ENCODE measurements at regions of chr16 and their contacts with region 1.

Region 1: GRCh38 chr16:17224879-17225281 is 245.9 kb downstream of the XYLT1 start:
- DNase-seq: peak; percentile 50 to 75
- ATAC-seq: peak; percentile 97 to 99
- H3K4me3 ChIP-seq: no peak overlapping the region
- H3K27ac ChIP-seq: peak overlapping the region; percentile 43 to 63 (median 56)
- H3K4me1 ChIP-seq: peaks cover 23 to 32% of the 10 kb centered on the region in 2 donors
- H3K27me3 ChIP-seq: no peaks in the 10 kb centered on the region
- CTCF ChIP-seq: no peak
- POLR2A ChIP-seq: no peak

Region 2: DNA sequence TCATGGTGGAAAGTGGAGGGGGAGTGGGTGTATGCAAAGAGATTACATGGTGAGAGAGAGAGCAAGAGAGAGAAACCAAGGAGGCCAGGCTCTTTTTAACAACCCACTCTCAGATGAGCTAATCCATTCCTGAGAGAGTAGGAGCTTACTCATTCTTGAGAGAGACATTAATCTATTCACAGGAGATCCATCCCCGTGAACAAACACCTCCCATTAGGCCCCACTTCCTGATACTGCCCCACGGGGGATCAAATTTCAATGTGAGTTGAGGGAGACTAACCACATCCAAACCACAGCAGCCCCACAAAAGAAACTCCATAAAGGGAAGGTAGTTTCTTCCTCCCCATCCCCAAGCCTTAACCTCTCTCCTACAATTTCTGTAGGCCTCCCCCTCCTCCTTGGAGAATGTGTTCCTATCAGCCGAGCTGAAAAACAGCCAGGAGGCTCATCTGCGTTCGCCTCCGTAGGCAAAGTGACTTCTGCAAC is 395.9 kb before region 1 on chr16:
- in situ Hi-C with region 1: no loop called
- intact Hi-C with region 1: no loop called
- DNase-seq: no peak
- ATAC-seq: no peak
- H3K4me3 ChIP-seq: no peak overlapping the region
- H3K27ac ChIP-seq: no peak overlapping the region
- H3K4me1 ChIP-seq: no peaks in the 10 kb centered on the region
- H3K27me3 ChIP-seq: no peaks in the 10 kb centered on the region
- CTCF ChIP-seq: no peak
- POLR2A ChIP-seq: no peak

Region 3: GRCh38 chr16:17271687-17272086 is 46.8 kb after region 1 on chr16:
- in situ Hi-C with region 1: no loop called
- intact Hi-C with region 1: loop called (anchors 5 kb)
- DNase-seq: no peak
- ATAC-seq: no peak
- H3K4me3 ChIP-seq: no peak overlapping the region
- H3K27ac ChIP-seq: peak overlapping the region in 1 of 4 donors; percentile 26
- H3K4me1 ChIP-seq: peaks cover 17 to 32% of the 10 kb centered on the region in 2 donors
- H3K27me3 ChIP-seq: no peaks in the 10 kb centered on the region
- CTCF ChIP-seq: no peak
- POLR2A ChIP-seq: no peak

Region 4: GRCh38 chr16:17343028-17343427 is 118.1 kb after region 1 on chr16:
- in situ Hi-C with region 1: no loop called
- intact Hi-C with region 1: loop called (anchors 5 kb)
- DNase-seq: no peak
- ATAC-seq: no peak
- H3K4me3 ChIP-seq: no peak overlapping the region
- H3K27ac ChIP-seq: no peak overlapping the region
- H3K4me1 ChIP-seq: peaks cover 14 to 16% of the 10 kb centered on the region in 2 donors
- H3K27me3 ChIP-seq: no peaks in the 10 kb centered on the region
- CTCF ChIP-seq: no peak
- POLR2A ChIP-seq: no peak

Region 5: GRCh38 chr16:17377360-17378324 is 152.8 kb after region 1 on chr16:
- in situ Hi-C with region 1: no loop called
- intact Hi-C with region 1: loop called (anchors 2 kb)
- DNase-seq: no peak
- ATAC-seq: peak; percentile 89 to 92
- H3K4me3 ChIP-seq: no peak overlapping the region
- H3K27ac ChIP-seq: peak overlapping the region in 1 of 4 donors; percentile 60
- H3K4me1 ChIP-seq: peaks cover 25 to 26% of the 10 kb centered on the region in 2 donors
- H3K27me3 ChIP-seq: no peaks in the 10 kb centered on the region
- CTCF ChIP-seq: no peak
- POLR2A ChIP-seq: no peak

Region 6: GRCh38 chr16:17404941-17405689 is 180.2 kb after region 1 on chr16:
- in situ Hi-C with region 1: no loop called
- intact Hi-C with region 1: loop called (anchors 2 kb)
- DNase-seq: peak; percentile 50 to 77
- ATAC-seq: peak; percentile 76 to 81
- H3K4me3 ChIP-seq: peak overlapping the region in 3 of 4 donors; percentile 10 to 27 (median 18)
- H3K27ac ChIP-seq: peak overlapping the region; percentile 62 to 80 (median 64)
- H3K4me1 ChIP-seq: peaks cover 7 to 13% of the 10 kb centered on the region in 2 donors
- H3K27me3 ChIP-seq: no peaks in the 10 kb centered on the region
- CTCF ChIP-seq: no peak
- POLR2A ChIP-seq: peak in 1 of 2 donors; percentile 8

Region 7: DNA sequence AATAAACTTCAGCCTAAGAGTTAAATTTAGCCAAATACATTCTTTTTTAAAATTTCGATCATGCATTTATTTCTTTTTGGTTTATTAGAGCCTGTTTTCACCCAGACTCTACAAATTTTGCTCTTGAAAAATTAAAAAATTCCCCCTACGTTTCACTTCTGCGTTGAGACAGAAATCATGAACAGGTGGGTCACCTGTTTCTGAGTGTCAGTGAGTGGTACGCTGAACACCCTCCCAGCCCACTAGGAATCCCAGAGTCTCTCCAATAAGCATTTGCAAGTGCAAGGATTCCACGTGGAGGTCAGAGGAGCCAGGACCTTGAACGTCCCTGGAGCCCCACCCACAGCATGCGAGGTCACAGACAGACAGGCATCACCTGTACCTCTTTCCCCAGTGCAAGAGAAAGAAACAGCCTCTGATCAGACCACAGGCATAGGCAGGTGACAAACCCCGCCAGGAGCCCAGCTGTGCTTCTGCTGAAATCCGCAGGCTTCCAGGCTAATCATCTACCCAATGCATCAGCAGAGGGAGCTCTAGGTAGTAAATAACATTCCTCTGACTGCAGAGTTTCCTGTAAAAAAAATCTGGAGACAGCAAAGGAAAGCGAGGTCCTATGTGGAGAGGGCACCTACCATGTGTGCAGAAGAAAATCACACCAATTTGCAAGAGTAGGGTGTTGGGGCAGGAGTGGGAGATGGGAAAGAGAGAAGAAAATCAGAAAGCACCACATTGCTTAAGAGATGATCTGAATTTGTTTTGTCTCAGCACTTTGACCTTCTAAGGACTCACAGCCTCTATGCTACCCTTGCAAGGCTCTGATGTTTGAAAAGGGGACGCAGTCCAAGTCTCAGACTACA is 251.8 kb after region 1 on chr16:
- in situ Hi-C with region 1: loop called in 2 of 4 experiments (anchors 25 kb)
- intact Hi-C with region 1: loop called (anchors 10 kb)
- DNase-seq: no peak
- ATAC-seq: no peak
- H3K4me3 ChIP-seq: no peak overlapping the region
- H3K27ac ChIP-seq: no peak overlapping the region
- H3K4me1 ChIP-seq: no peaks in the 10 kb centered on the region
- H3K27me3 ChIP-seq: peaks cover 0 to 5% (median 0%) of the 10 kb centered on the region in 3 donors
- CTCF ChIP-seq: peak in 1 of 5 experiments; percentile 40
- POLR2A ChIP-seq: no peak